ENCODE measurements at regions of chr2 and their contacts with region 1.

Region 1: DNA sequence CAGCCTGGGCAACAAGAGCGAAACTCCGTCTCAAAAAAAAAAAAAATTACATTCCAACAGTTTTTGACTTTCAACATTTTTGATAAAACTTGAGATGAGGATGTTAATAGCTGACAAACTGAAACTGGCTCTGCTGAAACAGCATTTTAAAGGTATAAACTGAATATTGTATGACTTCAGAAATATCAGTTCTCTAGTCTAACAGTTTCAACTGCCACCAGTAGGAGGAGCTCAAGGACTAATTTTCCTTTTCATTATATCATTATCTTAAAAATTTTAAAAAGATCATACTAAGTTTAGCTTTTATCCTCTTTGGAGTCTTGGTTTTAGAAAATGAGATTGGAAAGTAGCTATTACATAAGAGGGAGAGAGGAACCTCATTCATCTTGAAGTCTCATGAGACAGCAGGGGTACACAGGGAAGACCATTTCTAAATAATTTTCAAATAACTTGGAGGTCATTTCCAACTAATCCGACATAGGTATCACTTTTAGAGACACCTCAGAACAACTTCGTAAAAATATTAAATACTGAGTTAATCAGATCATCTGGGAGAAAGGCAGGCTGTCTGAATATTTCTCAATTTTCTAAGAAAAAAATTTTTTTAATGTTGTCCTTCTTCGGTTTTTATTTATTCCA is 37.6 kb upstream of the MCM6 start:
- DNase-seq: peak; percentile 74
- ATAC-seq: peak; percentile 41
- H3K4me3 ChIP-seq: no peak overlapping the region
- H3K4me3 Mint-ChIP-seq: no peak overlapping the region
- H3K27ac ChIP-seq: peak overlapping the region in 1 of 2 donors; percentile 46
- H3K27ac Mint-ChIP-seq: peak overlapping the region; percentile 46
- H3K4me1 ChIP-seq: no peaks in the 10 kb centered on the region
- H3K4me1 Mint-ChIP-seq: peaks cover 10% of the 10 kb centered on the region
- H3K27me3 ChIP-seq: no peaks in the 10 kb centered on the region
- H3K27me3 Mint-ChIP-seq: no peaks in the 10 kb centered on the region
- CTCF ChIP-seq: peak; percentile 96

Region 2: GRCh38 chr2:135825550-135826176 is 88.2 kb before region 1 on chr2:
- CTCF ChIA-PET with region 1: no interaction called
- POLR2A ChIA-PET with region 1: no interaction called
- intact Hi-C with region 1: no loop called
- DNase-seq: no peak
- ATAC-seq: no peak
- H3K4me3 ChIP-seq: no peak overlapping the region
- H3K4me3 Mint-ChIP-seq: no peak overlapping the region
- H3K27ac ChIP-seq: no peak overlapping the region
- H3K27ac Mint-ChIP-seq: no peak overlapping the region
- H3K4me1 ChIP-seq: no peaks in the 10 kb centered on the region
- H3K4me1 Mint-ChIP-seq: no peaks in the 10 kb centered on the region
- H3K27me3 ChIP-seq: no peaks in the 10 kb centered on the region
- H3K27me3 Mint-ChIP-seq: peaks cover 6% of the 10 kb centered on the region
- CTCF ChIP-seq: no peak

Region 3: GRCh38 chr2:135925571-135925970 is 11.7 kb after region 1 on chr2:
- CTCF ChIA-PET with region 1: interaction called, 10 read pairs
- POLR2A ChIA-PET with region 1: no interaction called
- intact Hi-C with region 1: no loop called
- DNase-seq: no peak
- ATAC-seq: no peak
- H3K4me3 ChIP-seq: no peak overlapping the region
- H3K4me3 Mint-ChIP-seq: no peak overlapping the region
- H3K27ac ChIP-seq: no peak overlapping the region
- H3K27ac Mint-ChIP-seq: no peak overlapping the region
- H3K4me1 ChIP-seq: no peaks in the 10 kb centered on the region
- H3K4me1 Mint-ChIP-seq: no peaks in the 10 kb centered on the region
- H3K27me3 ChIP-seq: no peaks in the 10 kb centered on the region
- H3K27me3 Mint-ChIP-seq: no peaks in the 10 kb centered on the region
- CTCF ChIP-seq: no peak

Region 4: DNA sequence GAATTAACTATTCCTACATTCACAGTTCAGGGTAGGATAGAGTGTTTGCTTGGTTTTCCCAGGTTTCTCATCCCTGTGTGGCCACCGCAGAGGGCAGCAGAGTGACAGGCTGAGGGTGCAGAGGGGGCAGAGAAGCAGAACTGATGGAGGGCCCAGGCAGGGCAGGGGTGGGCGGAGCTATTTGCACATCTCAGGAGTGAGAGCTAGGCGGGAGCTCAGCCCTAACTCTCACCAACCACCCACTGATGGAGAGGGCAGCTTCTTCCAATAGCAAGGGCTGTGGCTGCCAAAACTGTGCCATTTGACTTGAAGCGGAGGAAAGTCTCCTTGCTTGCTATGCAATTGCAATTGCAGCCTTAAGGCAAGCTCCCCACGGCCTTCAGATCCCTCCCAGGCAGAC is 83.5 kb after region 1 on chr2:
- CTCF ChIA-PET with region 1: interaction called, 16 read pairs
- POLR2A ChIA-PET with region 1: no interaction called
- intact Hi-C with region 1: loop called (anchors 5 kb)
- DNase-seq: peak; percentile 83
- ATAC-seq: peak; percentile 95
- H3K4me3 ChIP-seq: peak overlapping the region in 3 of 5 experiments; percentile 8 to 17 (median 10)
- H3K4me3 Mint-ChIP-seq: peak overlapping the region; percentile 74
- H3K27ac ChIP-seq: peak overlapping the region; percentile 47 to 50
- H3K27ac Mint-ChIP-seq: peak overlapping the region; percentile 79
- H3K4me1 ChIP-seq: peaks cover 52 to 57% of the 10 kb centered on the region in 2 donors
- H3K4me1 Mint-ChIP-seq: peaks cover 51% of the 10 kb centered on the region
- H3K27me3 ChIP-seq: no peaks in the 10 kb centered on the region
- H3K27me3 Mint-ChIP-seq: no peaks in the 10 kb centered on the region
- CTCF ChIP-seq: peak; percentile 26

Region 5: DNA sequence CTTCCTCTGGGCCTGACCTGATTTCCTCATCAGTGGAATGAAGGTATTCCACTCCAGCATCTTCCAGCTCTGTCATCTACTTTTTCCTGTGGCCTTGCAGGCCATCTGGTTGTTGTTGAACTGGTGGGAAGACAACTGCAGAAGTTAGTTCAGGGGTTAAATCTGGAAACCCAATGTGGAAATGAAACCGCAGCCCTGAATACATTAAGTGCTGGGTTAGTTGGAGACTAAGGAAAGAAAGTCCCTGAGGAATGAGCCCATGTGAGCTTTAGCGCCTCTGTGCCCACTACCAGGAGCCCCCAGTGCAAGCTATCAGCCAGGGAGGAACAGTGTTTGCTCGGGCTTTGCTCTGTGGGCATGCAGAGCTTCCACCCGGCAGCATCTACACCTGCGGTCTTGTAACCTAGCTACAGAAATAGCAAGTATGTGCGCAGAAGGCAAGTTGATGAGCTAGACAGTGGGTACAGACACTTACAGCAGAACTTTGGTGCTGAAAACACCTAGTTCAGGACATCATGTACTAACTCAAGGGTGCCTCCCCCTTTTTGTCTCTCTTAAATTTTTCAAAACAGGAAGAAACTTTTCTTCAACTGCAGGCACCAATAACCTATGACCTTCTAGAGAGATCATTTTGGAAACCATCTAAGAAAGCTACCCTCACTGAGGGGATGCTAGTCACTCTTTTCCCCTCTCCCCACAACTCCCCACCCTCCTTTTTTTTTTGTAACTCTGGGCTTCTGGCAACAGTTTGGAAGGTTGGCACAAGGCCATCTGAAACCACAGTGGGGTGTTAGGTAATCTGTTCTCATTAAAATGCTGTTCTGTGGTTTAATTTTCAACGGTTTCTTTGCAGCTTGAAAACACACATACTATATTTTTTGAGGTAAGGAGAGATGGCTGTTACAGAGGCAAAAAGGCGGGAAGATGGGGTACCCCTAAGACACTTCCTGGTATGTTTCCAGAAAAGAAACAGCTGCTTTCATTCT is 222.4 kb after region 1 on chr2:
- CTCF ChIA-PET with region 1: no interaction called
- POLR2A ChIA-PET with region 1: no interaction called
- intact Hi-C with region 1: no loop called
- DNase-seq: peak; percentile 94
- ATAC-seq: peak; percentile 50
- H3K4me3 ChIP-seq: peak overlapping the region in 3 of 5 experiments; percentile 10 to 33 (median 10)
- H3K4me3 Mint-ChIP-seq: peak overlapping the region; percentile 83
- H3K27ac ChIP-seq: peak overlapping the region; percentile 98 to 99
- H3K27ac Mint-ChIP-seq: peak overlapping the region; percentile 96
- H3K4me1 ChIP-seq: peaks cover 94 to 98% of the 10 kb centered on the region in 2 donors
- H3K4me1 Mint-ChIP-seq: peaks cover 92% of the 10 kb centered on the region
- H3K27me3 ChIP-seq: no peaks in the 10 kb centered on the region
- H3K27me3 Mint-ChIP-seq: no peaks in the 10 kb centered on the region
- CTCF ChIP-seq: no peak

Region 6: DNA sequence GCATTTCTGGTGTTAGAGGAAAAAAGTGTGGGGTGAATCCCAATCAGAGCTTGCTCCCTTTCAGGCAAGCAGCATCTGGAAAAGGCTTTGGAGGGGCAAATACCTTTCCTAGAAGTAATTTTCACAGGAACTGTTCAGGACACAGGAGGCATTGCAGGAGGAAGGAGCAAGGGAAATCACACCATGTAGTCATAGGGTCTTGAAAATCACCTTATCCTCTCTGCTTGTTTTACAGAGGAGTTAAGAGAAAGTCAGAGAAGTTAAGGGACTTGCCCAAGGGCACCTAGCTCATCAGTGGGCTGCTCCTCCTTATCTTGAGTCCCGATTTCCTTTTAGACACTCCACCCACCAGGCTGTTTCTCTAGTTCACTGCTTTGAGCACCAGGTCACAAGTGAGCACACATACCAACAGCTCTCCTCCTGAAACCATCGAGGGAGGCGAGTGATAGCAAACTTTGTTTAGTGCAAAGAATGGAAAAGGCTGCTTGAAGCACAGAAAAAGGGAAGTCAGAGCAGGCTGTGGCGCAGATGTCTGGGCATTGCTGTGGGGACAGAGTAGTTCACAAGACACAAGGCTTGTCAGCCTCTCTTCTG is 293.3 kb after region 1 on chr2:
- CTCF ChIA-PET with region 1: interaction called, 5 read pairs
- POLR2A ChIA-PET with region 1: no interaction called
- intact Hi-C with region 1: loop called (anchors 5 kb)
- DNase-seq: peak; percentile 94
- ATAC-seq: peak; percentile 65
- H3K4me3 ChIP-seq: peak overlapping the region in 4 of 5 experiments; percentile 1 to 44 (median 26)
- H3K4me3 Mint-ChIP-seq: peak overlapping the region; percentile 84
- H3K27ac ChIP-seq: peak overlapping the region; percentile 98 to 99
- H3K27ac Mint-ChIP-seq: peak overlapping the region; percentile 99
- H3K4me1 ChIP-seq: peaks cover 70 to 74% of the 10 kb centered on the region in 2 donors
- H3K4me1 Mint-ChIP-seq: peaks cover 77% of the 10 kb centered on the region
- H3K27me3 ChIP-seq: no peaks in the 10 kb centered on the region
- H3K27me3 Mint-ChIP-seq: no peaks in the 10 kb centered on the region
- CTCF ChIP-seq: no peak

Region 7: DNA sequence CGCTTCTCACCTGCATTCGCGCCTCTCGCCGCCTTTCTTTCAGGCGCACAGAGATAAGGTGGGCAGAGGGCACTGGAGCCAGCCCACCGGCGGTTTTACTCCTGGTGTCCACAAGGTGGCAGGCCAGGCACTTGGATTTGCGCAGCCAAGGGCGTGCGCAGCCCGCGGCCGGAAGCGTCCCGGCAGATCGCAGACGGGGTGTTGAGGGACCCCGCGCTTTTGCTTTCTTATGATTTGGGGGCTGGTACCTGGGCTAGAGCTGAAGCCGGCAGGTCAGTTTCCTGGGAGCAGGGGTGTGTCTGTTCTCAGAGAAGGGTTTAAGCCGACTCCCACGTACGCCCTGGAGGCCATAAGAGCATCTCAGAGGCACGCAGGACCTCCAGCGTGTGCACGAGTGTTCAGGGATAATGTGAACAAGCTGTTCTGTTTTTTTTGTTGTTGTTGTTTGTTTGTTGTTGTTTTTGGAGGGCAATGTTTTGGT is 509.7 kb after region 1 on chr2:
- CTCF ChIA-PET with region 1: interaction called, 23 read pairs
- POLR2A ChIA-PET with region 1: interaction called, 5 read pairs
- intact Hi-C with region 1: loop called (anchors 1 kb)
- DNase-seq: peak; percentile 86
- ATAC-seq: peak; percentile 100
- H3K4me3 ChIP-seq: peak overlapping the region; percentile 42 to 92 (median 57)
- H3K4me3 Mint-ChIP-seq: peak overlapping the region; percentile 84
- H3K27ac ChIP-seq: no peak overlapping the region
- H3K27ac Mint-ChIP-seq: peak overlapping the region; percentile 28
- H3K4me1 ChIP-seq: peaks cover 10% of the 10 kb centered on the region in 2 donors
- H3K4me1 Mint-ChIP-seq: peaks cover 13% of the 10 kb centered on the region
- H3K27me3 ChIP-seq: peaks cover 0 to 20% (median 4%) of the 10 kb centered on the region in 4 experiments
- H3K27me3 Mint-ChIP-seq: peaks cover 39% of the 10 kb centered on the region
- CTCF ChIP-seq: peak; percentile 86

Region 8: DNA sequence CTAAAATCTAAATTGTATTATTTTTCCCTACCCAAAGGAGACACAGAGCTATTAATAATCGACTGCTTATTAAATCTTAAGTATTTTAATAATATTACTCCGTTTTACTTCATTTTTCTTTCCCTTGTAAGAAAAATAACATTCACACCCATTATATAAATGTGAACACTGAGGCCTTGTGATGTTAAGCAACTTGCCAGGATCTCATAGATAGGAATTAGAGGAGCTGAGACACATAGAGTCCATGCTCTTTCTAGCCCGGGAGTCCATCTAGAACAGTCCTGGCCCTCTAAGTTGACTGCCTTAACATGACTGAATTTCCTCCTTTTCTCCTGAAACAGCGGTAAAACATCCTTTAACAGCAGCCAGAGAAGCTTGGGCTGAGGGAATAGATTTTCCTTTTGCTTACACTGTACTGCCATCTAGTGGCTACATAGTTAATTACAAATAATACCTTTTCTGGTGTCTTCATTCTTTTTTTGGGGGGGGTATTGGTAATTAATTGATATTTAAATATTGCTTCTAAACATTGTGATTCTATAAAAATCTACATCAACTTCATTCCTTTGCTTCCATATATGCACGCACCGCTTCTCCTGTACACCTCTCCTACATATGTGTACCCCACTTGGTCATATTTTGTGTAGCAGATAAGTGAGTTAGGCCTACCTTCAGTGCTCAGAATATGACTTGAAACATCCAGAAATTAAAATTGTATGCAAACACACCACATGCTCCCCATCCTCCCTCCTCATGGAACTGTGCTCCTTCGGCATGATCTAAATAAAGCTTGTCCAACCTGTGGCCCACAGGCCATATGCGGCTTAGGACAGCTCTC is 1924.6 kb after region 1 on chr2:
- CTCF ChIA-PET with region 1: interaction called, 20 read pairs
- POLR2A ChIA-PET with region 1: interaction called, 3 read pairs
- intact Hi-C with region 1: loop called (anchors 1 kb)
- DNase-seq: peak; percentile 53
- ATAC-seq: no peak
- H3K4me3 ChIP-seq: no peak overlapping the region
- H3K4me3 Mint-ChIP-seq: no peak overlapping the region
- H3K27ac ChIP-seq: no peak overlapping the region
- H3K27ac Mint-ChIP-seq: no peak overlapping the region
- H3K4me1 ChIP-seq: no peaks in the 10 kb centered on the region
- H3K4me1 Mint-ChIP-seq: no peaks in the 10 kb centered on the region
- H3K27me3 ChIP-seq: no peaks in the 10 kb centered on the region
- H3K27me3 Mint-ChIP-seq: no peaks in the 10 kb centered on the region
- CTCF ChIP-seq: peak; percentile 84